CD4-positive, alpha-beta T cell (primary cell): ENCODE measurements at regions of chr5 and their contacts with region 1.

Region 1: GRCh38 chr5:132437604-132438266 is 52.8 kb downstream of the IRF1 start:
- DNase-seq: peak; percentile 25 to 87 (median 62)
- ATAC-seq: peak; percentile 96
- H3K4me3 ChIP-seq: peak overlapping the region; percentile 21
- H3K4me3 Mint-ChIP-seq: peak overlapping the region; percentile 42
- H3K27ac ChIP-seq: peak overlapping the region; percentile 67 to 72
- H3K27ac Mint-ChIP-seq: peak overlapping the region; percentile 90
- H3K4me1 ChIP-seq: peaks cover 87% of the 10 kb centered on the region
- H3K4me1 Mint-ChIP-seq: peaks cover 89% of the 10 kb centered on the region
- H3K27me3 ChIP-seq: no peaks in the 10 kb centered on the region
- H3K27me3 Mint-ChIP-seq: no peaks in the 10 kb centered on the region
- CTCF ChIP-seq: no peak

Region 2: GRCh38 chr5:132466433-132467286 is 28.9 kb after region 1 on chr5:
- CTCF ChIA-PET with region 1: interaction called, 6 read pairs
- POLR2A ChIA-PET with region 1: interaction called, 645 read pairs
- intact Hi-C with region 1: no loop called
- DNase-seq: peak in 13 of 14 experiments; percentile 56 to 90 (median 66)
- ATAC-seq: peak; percentile 63
- H3K4me3 ChIP-seq: peak overlapping the region; percentile 34
- H3K4me3 Mint-ChIP-seq: peak overlapping the region; percentile 85
- H3K27ac ChIP-seq: peak overlapping the region; percentile 69 to 73
- H3K27ac Mint-ChIP-seq: peak overlapping the region; percentile 97
- H3K4me1 ChIP-seq: peaks cover 88% of the 10 kb centered on the region
- H3K4me1 Mint-ChIP-seq: peaks cover 99% of the 10 kb centered on the region
- H3K27me3 ChIP-seq: no peaks in the 10 kb centered on the region
- H3K27me3 Mint-ChIP-seq: no peaks in the 10 kb centered on the region
- CTCF ChIP-seq: no peak